K562 (cell line): ENCODE measurements at regions of chr6 and their contacts with region 1.

Region 1: DNA sequence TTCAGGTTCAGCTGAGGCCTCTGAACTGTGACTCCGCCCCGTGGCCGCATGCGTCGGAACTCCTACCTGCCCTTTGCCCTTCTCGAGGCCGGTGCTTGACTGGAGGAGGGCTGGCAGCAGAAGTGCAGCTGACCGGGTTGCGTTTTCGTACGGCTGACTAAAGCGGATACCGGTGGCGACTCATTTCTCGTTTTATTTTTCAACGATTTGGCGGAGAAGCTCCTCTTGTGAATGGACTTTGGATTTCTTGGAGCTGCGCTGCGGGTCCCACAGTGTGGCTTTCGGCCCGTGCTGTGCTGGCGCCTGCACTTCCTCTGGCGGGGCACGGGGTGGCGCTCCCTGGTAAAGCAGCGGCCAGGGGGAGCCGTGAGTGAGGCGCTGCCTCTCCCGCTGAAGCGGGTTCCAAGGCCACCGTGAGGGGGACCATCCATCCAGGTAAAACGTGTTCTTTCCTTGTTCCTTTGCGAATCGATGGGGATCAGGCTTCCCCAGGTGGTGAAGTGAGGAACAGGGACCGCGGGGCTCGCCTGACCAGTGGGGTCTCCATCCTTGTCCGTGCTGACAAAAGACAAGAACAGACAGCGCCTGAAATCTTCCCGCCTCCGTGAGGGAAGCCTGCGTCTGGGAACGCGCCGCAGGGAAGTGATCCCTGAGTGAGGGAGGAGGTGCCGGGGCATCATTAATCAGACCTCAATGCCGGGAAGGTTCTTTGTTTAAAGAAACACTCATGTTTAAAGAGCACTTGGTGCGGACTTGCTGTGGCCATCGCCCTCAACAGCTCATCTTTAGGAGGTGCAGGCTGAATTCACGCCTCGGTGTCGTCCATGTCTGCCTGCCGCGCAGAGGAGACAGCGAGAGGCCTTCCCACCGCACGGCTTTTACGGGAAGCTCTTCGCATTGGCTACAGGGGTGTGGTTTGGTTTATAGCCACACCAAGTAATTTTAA is 38.8 kb downstream of the ERMARD start:
- DNase-seq: peak; percentile 81 to 91 (median 90)
- ATAC-seq: peak; percentile 97
- H3K4me3 ChIP-seq: peak overlapping the region; percentile 26
- H3K27ac ChIP-seq: no peak overlapping the region
- H3K4me1 ChIP-seq: peaks cover 11 to 17% of the 10 kb centered on the region in 2 experiments; a peak in 3 of 5 replicates
- H3K27me3 ChIP-seq: peaks cover 63 to 87% of the 10 kb centered on the region in 2 experiments
- CTCF ChIP-seq: peak; percentile 96 to 99 (median 99)
- EP300 ChIP-seq: no peak
- POLR2A ChIP-seq: no peak
- RAD21 ChIP-seq: peak; percentile 88 to 93

Region 2: DNA sequence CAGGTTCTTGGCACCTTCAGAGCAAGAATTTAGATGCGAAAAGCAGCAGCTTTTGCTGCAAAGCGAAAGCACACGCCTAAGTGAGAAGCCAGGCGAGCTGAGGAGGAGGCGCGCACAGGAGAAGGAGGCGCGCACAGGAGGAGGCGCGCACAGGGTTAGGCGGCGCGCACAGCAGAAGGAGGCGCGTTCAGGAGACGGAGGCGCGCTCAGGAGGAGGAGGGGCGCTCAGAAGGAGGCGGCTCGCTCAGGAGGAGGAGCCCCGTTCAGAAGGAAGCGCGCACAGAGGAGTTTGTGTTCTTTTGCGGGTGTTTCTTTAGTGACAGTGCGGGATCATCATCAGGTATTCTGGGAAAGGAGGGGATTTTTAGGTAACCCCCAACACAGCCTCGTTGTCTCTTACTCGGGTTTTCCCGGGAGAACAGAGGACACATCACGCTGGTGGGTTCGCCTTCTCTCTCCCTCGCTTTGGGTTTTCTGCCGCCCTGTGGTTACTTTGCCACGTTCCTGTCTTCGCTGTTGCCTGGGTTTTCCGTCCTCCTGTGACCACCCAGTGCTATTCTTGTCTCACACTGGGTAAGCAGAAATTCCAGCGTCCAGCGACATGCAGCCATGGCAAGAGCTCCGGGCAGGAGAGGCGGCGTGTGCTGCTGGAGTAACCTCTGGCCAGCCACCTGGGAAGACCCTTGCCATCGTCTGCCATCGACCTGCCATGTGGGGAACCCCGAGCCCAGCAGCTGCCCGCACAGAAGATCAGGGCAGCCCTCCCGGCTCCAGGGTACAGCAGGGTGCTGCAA is 135.5 kb before region 1 on chr6:
- CTCF ChIA-PET with region 1: no interaction called
- POLR2A ChIA-PET with region 1: no interaction called
- in situ Hi-C with region 1: no loop called
- intact Hi-C with region 1: no loop called
- DNase-seq: no peak
- ATAC-seq: no peak
- H3K4me3 ChIP-seq: no peak overlapping the region
- H3K27ac ChIP-seq: no peak overlapping the region
- H3K4me1 ChIP-seq: peaks cover 0 to 3% of the 10 kb centered on the region in 2 experiments; a peak in 1 of 5 replicates
- H3K27me3 ChIP-seq: no peaks in the 10 kb centered on the region
- CTCF ChIP-seq: no peak
- EP300 ChIP-seq: no peak
- POLR2A ChIP-seq: no peak
- RAD21 ChIP-seq: no peak

Region 3: GRCh38 chr6:169803271-169803811 is 13.1 kb after region 1 on chr6:
- CTCF ChIA-PET with region 1: no interaction called
- POLR2A ChIA-PET with region 1: interaction called, 29 read pairs
- in situ Hi-C with region 1: no loop called
- intact Hi-C with region 1: no loop called
- DNase-seq: no peak
- ATAC-seq: no peak; the same call in 2 of the 3 replicates
- H3K4me3 ChIP-seq: no peak overlapping the region
- H3K27ac ChIP-seq: no peak overlapping the region
- H3K4me1 ChIP-seq: peaks cover 0 to 7% of the 10 kb centered on the region in 2 experiments; a peak in 2 of 5 replicates
- H3K27me3 ChIP-seq: peaks cover 42 to 53% of the 10 kb centered on the region in 2 experiments
- CTCF ChIP-seq: no peak
- EP300 ChIP-seq: no peak
- POLR2A ChIP-seq: no peak
- RAD21 ChIP-seq: no peak

Region 4: DNA sequence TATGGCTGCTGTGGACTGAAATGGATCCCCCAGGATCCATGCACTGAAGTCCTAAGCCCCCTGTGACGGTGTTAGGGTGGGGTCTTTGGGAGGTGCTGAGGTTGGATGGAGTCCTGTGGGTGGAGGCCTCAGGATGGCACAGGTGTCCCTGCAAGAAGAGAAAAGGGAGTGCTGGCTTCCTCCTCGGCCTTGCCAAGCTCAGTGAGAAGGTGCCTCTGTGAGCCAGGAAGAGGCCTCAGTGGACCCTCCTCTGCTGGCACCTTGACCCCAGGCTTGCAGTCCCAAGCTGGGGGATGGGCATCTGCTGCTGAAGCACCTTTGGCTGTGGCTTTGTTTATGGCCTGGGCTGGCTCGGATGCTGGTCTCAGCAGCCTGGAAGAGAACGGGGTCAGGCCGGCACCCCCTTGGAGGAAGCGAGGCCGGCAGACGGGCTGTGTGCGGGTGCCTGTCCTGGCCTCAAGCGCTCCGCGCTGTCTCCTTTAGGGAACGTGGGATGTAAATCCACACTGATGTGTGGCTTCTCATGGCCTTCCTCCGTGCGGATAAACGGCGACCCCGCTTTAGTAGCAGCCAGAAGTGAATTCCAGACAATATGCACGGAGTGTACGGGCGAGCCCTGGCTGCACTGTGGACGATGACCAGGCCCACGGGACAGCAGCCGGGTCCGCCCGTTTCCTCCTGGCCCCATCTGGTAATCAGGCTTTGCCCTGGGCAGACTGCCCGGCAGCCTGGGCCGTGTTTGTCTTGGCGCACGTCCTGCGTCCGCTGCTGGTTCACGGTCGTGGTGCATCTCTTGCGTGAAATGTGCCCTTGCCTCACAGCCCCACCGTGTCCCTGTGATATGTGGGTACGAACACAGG is 143.8 kb after region 1 on chr6:
- CTCF ChIA-PET with region 1: no interaction called
- POLR2A ChIA-PET with region 1: no interaction called
- in situ Hi-C with region 1: no loop called
- intact Hi-C with region 1: loop called (anchors 5 kb)
- DNase-seq: no peak
- ATAC-seq: no peak
- H3K4me3 ChIP-seq: no peak overlapping the region
- H3K27ac ChIP-seq: no peak overlapping the region
- H3K4me1 ChIP-seq: peaks cover 0 to 5% of the 10 kb centered on the region in 2 experiments; a peak in 1 of 5 replicates
- H3K27me3 ChIP-seq: peaks cover 68 to 75% of the 10 kb centered on the region in 2 experiments
- CTCF ChIP-seq: no peak
- EP300 ChIP-seq: no peak
- POLR2A ChIP-seq: no peak
- RAD21 ChIP-seq: no peak